Mucosa of descending colon (tissue), 3 donors: ENCODE measurements at regions of chr10 and their contacts with region 1.

Region 1: GRCh38 chr10:58177362-58177947 is 90.2 kb downstream of the IPMK start:
- DNase-seq: no peak
- ATAC-seq: peak; percentile 36
- H3K4me3 ChIP-seq: no peak overlapping the region
- H3K4me1 ChIP-seq: no peaks in the 10 kb centered on the region
- CTCF ChIP-seq: peak; percentile 31

Region 2: DNA sequence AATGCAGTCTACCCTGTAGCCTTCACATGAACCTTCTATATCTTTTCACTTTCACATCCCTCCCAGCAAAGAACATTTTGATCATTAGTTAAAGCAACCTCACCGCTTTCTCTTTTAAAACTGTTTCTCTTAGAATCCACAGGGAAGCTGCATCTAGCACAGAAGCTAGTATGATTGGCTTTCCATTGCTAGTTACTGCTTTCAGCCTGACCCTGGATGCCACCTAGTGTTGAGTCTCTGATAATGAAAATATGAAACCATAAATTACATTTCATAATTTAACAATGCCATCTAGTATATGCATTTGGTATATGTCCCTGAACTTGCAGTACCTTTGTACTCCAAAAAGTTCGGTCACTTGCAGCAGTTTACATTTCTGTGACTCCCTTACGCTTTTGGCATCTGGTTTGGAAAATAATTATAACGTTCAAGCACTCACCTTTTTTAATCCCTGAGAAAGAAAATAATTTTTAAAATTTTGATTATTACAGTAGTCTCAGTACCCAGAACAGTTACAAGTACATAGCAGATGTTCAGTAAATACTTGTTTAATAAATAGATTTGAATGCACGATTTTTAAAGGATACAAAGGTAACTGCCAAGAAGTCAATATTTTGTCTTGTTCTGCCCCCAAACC is 114.2 kb after region 1 on chr10:
- intact Hi-C with region 1: loop called (anchors 2 to 5 kb)
- DNase-seq: peak in 1 of 3 donors; percentile 50
- ATAC-seq: peak; percentile 90
- H3K4me3 ChIP-seq: no peak overlapping the region
- H3K4me1 ChIP-seq: no peaks in the 10 kb centered on the region
- CTCF ChIP-seq: peak; percentile 7

Region 3: GRCh38 chr10:58408011-58408410 is 230.6 kb after region 1 on chr10:
- intact Hi-C with region 1: loop called in 1 of 2 experiments (anchors 5 kb)
- DNase-seq: no peak
- ATAC-seq: no peak
- H3K4me3 ChIP-seq: no peak overlapping the region
- H3K4me1 ChIP-seq: no peaks in the 10 kb centered on the region
- CTCF ChIP-seq: no peak